ENCODE measurements at regions of chr6 and their contacts with region 1.

Region 1: DNA sequence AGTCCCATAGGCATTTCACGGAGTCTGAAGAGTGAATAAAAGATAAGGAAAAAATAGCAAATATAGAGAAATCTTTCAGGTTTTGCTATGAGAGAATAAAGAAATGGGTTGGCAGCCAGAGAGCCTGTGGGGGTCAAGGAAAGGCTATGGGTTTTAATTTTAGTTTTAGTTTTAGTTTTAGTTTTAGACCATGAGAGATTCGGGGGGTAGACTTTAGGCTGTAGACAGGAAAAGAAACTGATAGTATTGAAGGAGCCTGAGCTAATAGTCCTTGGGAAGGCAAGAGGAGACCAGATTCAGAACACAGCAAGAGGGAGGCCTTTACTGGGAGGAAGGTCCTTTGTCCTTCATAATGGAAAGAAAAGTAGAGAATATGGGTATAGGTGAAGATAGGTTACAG is 19.3 kb downstream of the DOP1A start:
- DNase-seq: no peak
- ATAC-seq: no peak
- H3K4me3 ChIP-seq: no peak overlapping the region
- H3K27ac ChIP-seq: no peak overlapping the region
- H3K4me1 ChIP-seq: no peaks in the 10 kb centered on the region; the same call in 1 of the 2 replicates
- H3K27me3 ChIP-seq: no peaks in the 10 kb centered on the region
- CTCF ChIP-seq: no peak

Region 2: GRCh38 chr6:82616386-82617028 is 470.2 kb before region 1 on chr6:
- CTCF ChIA-PET with region 1: no interaction called
- POLR2A ChIA-PET with region 1: no interaction called
- in situ Hi-C with region 1: no loop called
- intact Hi-C with region 1: no loop called
- DNase-seq: no peak
- ATAC-seq: no peak
- H3K4me3 ChIP-seq: no peak overlapping the region
- H3K27ac ChIP-seq: no peak overlapping the region
- H3K4me1 ChIP-seq: no peaks in the 10 kb centered on the region
- H3K27me3 ChIP-seq: no peaks in the 10 kb centered on the region
- CTCF ChIP-seq: peak; percentile 16; the same call in 1 of the 2 replicates

Region 3: GRCh38 chr6:83127976-83128375 is 41.2 kb after region 1 on chr6:
- CTCF ChIA-PET with region 1: no interaction called
- POLR2A ChIA-PET with region 1: no interaction called
- in situ Hi-C with region 1: no loop called
- intact Hi-C with region 1: loop called (anchors 2 kb)
- DNase-seq: no peak
- ATAC-seq: no peak
- H3K4me3 ChIP-seq: no peak overlapping the region
- H3K27ac ChIP-seq: no peak overlapping the region
- H3K4me1 ChIP-seq: no peaks in the 10 kb centered on the region
- H3K27me3 ChIP-seq: no peaks in the 10 kb centered on the region
- CTCF ChIP-seq: no peak

Region 4: DNA sequence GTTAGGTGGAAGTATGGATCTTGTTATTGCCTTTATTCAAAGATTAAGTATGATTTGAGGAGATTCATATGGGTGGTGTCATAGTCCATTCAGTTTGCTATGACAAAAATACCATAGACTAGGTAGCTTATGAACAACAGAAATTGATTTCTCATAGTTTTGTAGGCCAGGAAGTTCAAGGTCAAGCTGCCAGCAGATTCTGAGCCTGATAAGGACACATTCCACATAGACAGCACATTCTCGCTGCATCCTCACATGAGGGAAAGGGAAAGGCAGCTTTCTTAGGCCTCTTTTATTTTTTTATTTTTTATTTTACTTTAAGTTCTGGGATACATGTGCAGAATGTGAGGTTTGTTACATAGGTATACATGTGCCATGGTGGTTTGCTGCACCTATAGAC is 316.4 kb after region 1 on chr6:
- CTCF ChIA-PET with region 1: no interaction called
- POLR2A ChIA-PET with region 1: no interaction called
- in situ Hi-C with region 1: no loop called
- intact Hi-C with region 1: loop called (anchors 10 kb)
- DNase-seq: no peak
- ATAC-seq: no peak
- H3K4me3 ChIP-seq: no peak overlapping the region
- H3K27ac ChIP-seq: no peak overlapping the region
- H3K4me1 ChIP-seq: no peaks in the 10 kb centered on the region
- H3K27me3 ChIP-seq: no peaks in the 10 kb centered on the region
- CTCF ChIP-seq: no peak

Measured in Panc1 (cell line).